Heart left ventricle (tissue), 16 donors: ENCODE measurements at regions of chr7 and their contacts with region 1.

Region 1: GRCh38 chr7:105759670-105760550 is 116.5 kb downstream of the ATXN7L1 start:
- DNase-seq: peak in 3 of 5 donors; percentile 16 to 42 (median 41)
- ATAC-seq: peak in 3 of 4 donors; percentile 58 to 79 (median 67)
- H3K4me3 ChIP-seq: no peak overlapping the region
- H3K27ac ChIP-seq: no peak overlapping the region
- H3K4me1 ChIP-seq: peaks cover 0 to 16% (median 0%) of the 10 kb centered on the region in 12 donors
- H3K27me3 ChIP-seq: no peaks in the 10 kb centered on the region
- CTCF ChIP-seq: peak; percentile 42 to 68 (median 57)
- POLR2A ChIP-seq: no peak

Region 2: GRCh38 chr7:105652359-105652993 is 107.4 kb before region 1 on chr7:
- intact Hi-C with region 1: loop called (anchors 5 to 10 kb)
- DNase-seq: peak; percentile 68 to 86 (median 78)
- ATAC-seq: peak; percentile 68 to 94 (median 90)
- H3K4me3 ChIP-seq: no peak overlapping the region
- H3K27ac ChIP-seq: no peak overlapping the region
- H3K4me1 ChIP-seq: peaks cover 0 to 25% (median 15%) of the 10 kb centered on the region in 12 donors
- H3K27me3 ChIP-seq: no peaks in the 10 kb centered on the region
- CTCF ChIP-seq: peak; percentile 81 to 91 (median 86)
- POLR2A ChIP-seq: no peak

Region 3: DNA sequence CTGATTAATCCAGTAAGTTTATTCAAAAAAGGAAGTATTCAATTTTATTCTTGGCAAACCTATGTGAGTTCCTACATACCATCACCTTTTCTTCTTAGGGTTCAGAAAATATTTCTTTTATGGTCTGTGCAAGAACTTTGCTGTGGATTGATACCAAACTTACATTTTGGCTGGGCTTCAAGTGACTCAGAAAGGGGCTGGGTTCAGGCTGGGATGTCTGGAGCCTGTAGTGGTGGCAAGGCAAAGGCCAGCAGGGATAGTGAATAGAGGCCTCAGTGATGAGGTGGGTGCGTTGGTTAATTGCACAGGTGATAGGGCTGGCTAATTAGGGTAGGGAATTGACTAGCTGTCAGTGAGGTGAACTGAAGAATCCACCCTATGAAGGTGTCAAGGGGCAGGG is 156.7 kb after region 1 on chr7:
- intact Hi-C with region 1: loop called in 1 of 10 experiments (anchors 10 kb)
- DNase-seq: no peak
- ATAC-seq: no peak
- H3K4me3 ChIP-seq: no peak overlapping the region
- H3K27ac ChIP-seq: no peak overlapping the region
- H3K4me1 ChIP-seq: no peaks in the 10 kb centered on the region
- H3K27me3 ChIP-seq: no peaks in the 10 kb centered on the region
- CTCF ChIP-seq: no peak
- POLR2A ChIP-seq: no peak

Region 4: GRCh38 chr7:106009403-106010226 is 249.7 kb after region 1 on chr7:
- intact Hi-C with region 1: loop called in 9 of 10 experiments (anchors 1 to 10 kb)
- DNase-seq: peak; percentile 60 to 90 (median 76)
- ATAC-seq: peak; percentile 83 to 99 (median 95)
- H3K4me3 ChIP-seq: peak overlapping the region in 4 of 12 donors; percentile 5 to 22 (median 22)
- H3K27ac ChIP-seq: peak overlapping the region in 3 of 12 donors; percentile 17 to 53 (median 17)
- H3K4me1 ChIP-seq: peaks cover 0 to 15% (median 2%) of the 10 kb centered on the region in 12 donors
- H3K27me3 ChIP-seq: no peaks in the 10 kb centered on the region
- CTCF ChIP-seq: peak; percentile 89 to 98 (median 95)
- POLR2A ChIP-seq: peak in 1 of 2 donors; percentile 22

Region 5: GRCh38 chr7:106041140-106041717 is 281.3 kb after region 1 on chr7:
- intact Hi-C with region 1: loop called (anchors 1 to 5 kb)
- DNase-seq: no peak
- ATAC-seq: peak in 3 of 4 donors; percentile 7 to 23 (median 15)
- H3K4me3 ChIP-seq: no peak overlapping the region
- H3K27ac ChIP-seq: no peak overlapping the region
- H3K4me1 ChIP-seq: peaks cover 0 to 14% (median 4%) of the 10 kb centered on the region in 12 donors
- H3K27me3 ChIP-seq: peaks cover 0 to 3% (median 0%) of the 10 kb centered on the region in 9 donors
- CTCF ChIP-seq: peak; percentile 49 to 79 (median 62)
- POLR2A ChIP-seq: no peak

Region 6: DNA sequence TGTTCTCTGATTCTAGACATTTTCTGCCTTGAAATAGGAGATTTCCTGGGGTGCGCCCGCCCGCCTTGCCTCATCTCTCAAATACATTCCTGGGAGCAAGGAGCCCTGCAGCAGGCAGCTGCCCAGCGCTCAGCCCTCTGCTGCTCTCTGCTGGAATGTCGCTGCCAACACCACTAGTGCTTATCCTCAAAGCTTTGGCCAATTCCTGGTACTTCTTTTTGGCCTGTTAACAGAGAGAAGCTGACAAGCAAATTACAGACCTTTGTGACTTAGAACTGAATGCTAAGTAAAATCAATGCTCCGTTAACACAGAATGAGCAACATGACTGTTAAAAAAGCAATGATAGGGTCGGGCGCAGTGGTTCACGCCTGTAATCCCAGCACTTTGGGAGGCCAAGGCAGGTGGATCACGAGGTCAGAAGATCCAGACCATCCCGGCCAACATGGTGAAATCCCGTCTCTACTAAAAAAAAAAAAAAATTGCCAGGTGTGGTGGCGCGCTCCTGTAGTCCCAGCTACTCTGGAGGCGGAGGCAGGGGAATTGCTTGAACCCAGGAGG is 394.1 kb after region 1 on chr7:
- intact Hi-C with region 1: loop called in 3 of 10 experiments (anchors 10 kb)
- DNase-seq: peak; percentile 73 to 89 (median 78)
- ATAC-seq: peak; percentile 89 to 99 (median 97)
- H3K4me3 ChIP-seq: peak overlapping the region in 4 of 12 donors; percentile 10 to 16 (median 13)
- H3K27ac ChIP-seq: no peak overlapping the region
- H3K4me1 ChIP-seq: peaks cover 0 to 19% (median 10%) of the 10 kb centered on the region in 12 donors
- H3K27me3 ChIP-seq: peaks cover 0 to 5% (median 0%) of the 10 kb centered on the region in 9 donors
- CTCF ChIP-seq: peak; percentile 84 to 99 (median 95)
- POLR2A ChIP-seq: no peak

Region 7: DNA sequence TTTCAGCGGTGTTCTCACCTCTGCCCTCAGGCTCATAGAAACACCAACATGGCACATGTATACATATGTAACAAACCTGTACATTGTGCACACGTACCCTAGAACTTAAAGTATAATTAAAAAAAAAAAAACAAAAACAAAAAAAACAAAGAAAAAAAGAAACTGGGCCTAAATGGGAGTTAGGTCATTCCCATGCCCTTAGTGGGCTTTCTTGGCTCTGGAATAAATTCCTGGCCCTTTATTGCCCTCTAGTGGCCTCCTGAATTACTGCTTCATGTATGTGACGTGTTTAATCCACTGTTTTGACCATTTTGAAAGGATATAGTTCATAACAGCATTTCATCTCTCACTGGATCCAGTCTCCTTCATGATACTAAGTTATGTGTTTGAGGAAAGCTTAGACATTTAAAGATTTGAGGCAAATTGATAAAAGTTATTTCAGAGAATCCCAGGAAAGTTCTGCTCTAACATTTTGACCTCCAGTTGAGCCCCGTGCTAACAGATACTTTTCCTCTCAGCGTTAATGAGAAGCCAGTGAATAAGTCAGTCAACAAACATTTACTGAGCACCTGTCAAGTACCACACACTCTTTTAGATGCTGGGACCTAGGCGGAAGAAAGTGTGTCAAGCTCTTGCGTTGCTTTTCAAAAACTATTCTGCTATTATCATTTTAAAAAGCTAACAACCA is 406.9 kb after region 1 on chr7:
- intact Hi-C with region 1: loop called in 1 of 10 experiments (anchors 10 kb)
- DNase-seq: peak in 2 of 5 donors; percentile 43 to 58
- ATAC-seq: peak; percentile 47 to 80 (median 70)
- H3K4me3 ChIP-seq: no peak overlapping the region
- H3K27ac ChIP-seq: peak overlapping the region in 5 of 12 donors; percentile 4 to 58 (median 21)
- H3K4me1 ChIP-seq: peaks cover 0 to 22% (median 4%) of the 10 kb centered on the region in 12 donors
- H3K27me3 ChIP-seq: no peaks in the 10 kb centered on the region
- CTCF ChIP-seq: peak; percentile 76 to 94 (median 86)
- POLR2A ChIP-seq: no peak

Region 8: GRCh38 chr7:106216923-106217542 is 457.1 kb after region 1 on chr7:
- intact Hi-C with region 1: no loop called
- DNase-seq: peak; percentile 41 to 94 (median 69)
- ATAC-seq: peak; percentile 94 to 97 (median 96)
- H3K4me3 ChIP-seq: peak overlapping the region in 8 of 12 donors; percentile 6 to 33 (median 28)
- H3K27ac ChIP-seq: peak overlapping the region; percentile 76 to 93 (median 88)
- H3K4me1 ChIP-seq: peaks cover 7 to 38% (median 24%) of the 10 kb centered on the region in 12 donors
- H3K27me3 ChIP-seq: no peaks in the 10 kb centered on the region
- CTCF ChIP-seq: no peak
- POLR2A ChIP-seq: no peak